Posterior vena cava (tissue), 2 donors: ENCODE measurements at regions of chr17 and their contacts with region 1.

Region 1: GRCh38 chr17:46910179-46910927 is 12.6 kb upstream of the GOSR2 start:
- DNase-seq: no peak

Region 2: DNA sequence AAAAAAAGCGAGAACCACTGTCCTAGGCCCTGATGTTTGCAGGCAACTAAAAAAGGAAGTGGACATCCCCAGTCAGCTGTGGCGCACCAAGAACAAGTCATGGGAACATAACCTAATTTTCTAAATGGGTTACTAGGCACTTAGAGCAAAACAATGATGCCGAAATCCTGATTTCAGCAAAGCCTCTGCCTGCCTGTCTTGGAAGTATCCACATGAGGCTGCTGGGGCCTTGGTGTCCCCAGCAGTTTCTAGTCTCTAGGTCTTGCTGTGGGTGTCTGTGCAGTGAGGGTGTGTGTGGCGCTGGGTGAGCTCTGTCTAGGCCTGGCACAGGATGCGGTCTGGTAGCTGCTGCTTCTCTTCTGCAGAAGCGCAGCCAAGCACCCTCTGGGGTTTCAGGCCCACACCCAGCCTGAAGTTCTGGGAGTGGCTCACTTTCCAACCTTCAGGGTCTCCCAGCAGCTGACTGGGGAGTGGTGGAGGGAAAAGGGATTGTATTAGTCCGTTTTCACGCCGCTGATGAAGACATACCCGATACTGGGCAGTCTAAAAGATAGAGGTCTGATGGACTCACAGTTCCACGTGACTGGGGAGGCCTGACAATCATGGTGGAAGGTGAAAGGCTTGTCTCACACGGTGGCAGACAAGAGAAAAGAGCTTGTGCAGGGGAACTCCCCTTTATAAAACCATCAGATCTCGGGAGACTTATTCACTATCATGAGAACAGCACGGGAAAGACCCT is 890.2 kb before region 1 on chr17:
- intact Hi-C with region 1: no loop called
- DNase-seq: no peak

Region 3: GRCh38 chr17:46885415-46886309 is 24.7 kb before region 1 on chr17:
- intact Hi-C with region 1: loop called in 1 of 2 experiments (anchors 1 kb)
- DNase-seq: no peak

Region 4: DNA sequence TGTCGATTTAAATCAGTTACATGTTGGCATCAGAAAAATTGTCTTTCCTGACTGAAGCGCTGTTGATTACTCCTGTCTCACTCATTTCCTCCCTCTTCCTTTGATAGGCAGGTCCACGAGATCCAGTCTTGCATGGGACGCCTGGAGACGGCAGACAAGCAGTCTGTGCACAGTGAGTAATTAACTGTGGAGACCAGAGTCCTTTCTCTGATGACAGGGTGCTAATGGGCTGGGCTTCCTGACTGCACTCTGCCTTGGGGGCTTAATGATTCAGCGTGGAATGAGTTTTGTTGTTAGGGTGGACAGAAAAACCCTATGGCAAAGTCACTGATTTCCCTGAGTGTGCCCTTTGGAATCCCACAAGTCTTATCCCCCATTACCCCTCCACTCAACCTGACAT is 19.1 kb after region 1 on chr17:
- intact Hi-C with region 1: no loop called
- DNase-seq: no peak

Region 5: DNA sequence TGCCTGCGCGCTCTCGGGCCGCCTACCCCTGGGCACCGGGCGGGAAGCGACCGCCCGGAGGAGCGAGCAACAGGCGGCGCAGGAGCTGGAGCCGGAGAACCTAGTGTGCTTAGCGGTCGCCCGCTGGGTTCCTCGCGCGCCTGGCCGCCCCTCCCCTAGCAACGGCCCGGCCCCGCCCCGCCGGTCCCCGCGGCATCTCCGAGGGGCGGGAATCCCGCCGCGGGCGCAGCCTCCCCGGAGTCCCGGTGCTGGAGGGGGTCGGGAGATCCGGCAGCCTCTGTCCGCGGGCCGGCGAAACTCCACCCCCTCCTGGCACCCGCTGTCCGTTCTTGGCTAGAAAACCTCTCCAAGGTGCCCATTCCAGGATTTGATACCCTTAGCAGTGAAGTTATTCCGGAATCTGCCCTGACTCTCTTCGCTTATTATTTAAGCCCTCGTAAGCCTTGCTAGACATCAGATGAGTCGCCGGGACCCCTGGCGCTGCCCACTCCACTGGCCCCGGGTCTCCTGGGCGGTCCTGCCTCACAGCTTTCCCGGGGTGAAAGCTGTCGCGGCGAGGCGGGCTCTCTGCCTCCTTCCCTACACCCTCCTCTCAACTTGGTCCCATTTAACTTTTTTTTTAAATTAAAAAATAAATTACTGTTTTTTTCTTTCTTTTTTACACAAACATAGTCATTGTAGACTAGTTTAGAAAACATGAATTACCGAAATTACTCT is 69.0 kb after region 1 on chr17 and contains the start of gene RPRML:
- intact Hi-C with region 1: loop called in 1 of 2 experiments (anchors 2 kb)
- DNase-seq: peak; percentile 73
- total RNA-seq, gene RPRML: not detected

Region 6: GRCh38 chr17:47693734-47694580 is 783.6 kb after region 1 on chr17 and contains the start of gene TBKBP1:
- intact Hi-C with region 1: no loop called
- DNase-seq: no peak
- total RNA-seq, gene TBKBP1: 10.7 to 13.8 TPM